ENCODE measurements at regions of chr19 and their contacts with region 1.

Region 1: GRCh38 chr19:19488875-19489690 is 26.3 kb downstream of the TSSK6 start:
- DNase-seq: peak; percentile 34 to 69
- ATAC-seq: peak; percentile 28 to 47
- H3K4me3 ChIP-seq: peak overlapping the region in 1 of 4 donors; percentile 25
- H3K27ac ChIP-seq: peak overlapping the region; percentile 44 to 77 (median 72)
- H3K4me1 ChIP-seq: peaks cover 35 to 40% of the 10 kb centered on the region in 2 donors
- H3K27me3 ChIP-seq: no peaks in the 10 kb centered on the region
- CTCF ChIP-seq: no peak
- POLR2A ChIP-seq: no peak

Region 2: GRCh38 chr19:19361075-19361594 is 127.9 kb before region 1 on chr19:
- in situ Hi-C with region 1: loop called (anchors 5 kb)
- intact Hi-C with region 1: no loop called
- DNase-seq: peak; percentile 32 to 76
- ATAC-seq: peak; percentile 85 to 88
- H3K4me3 ChIP-seq: no peak overlapping the region
- H3K27ac ChIP-seq: peak overlapping the region in 1 of 4 donors; percentile 32
- H3K4me1 ChIP-seq: no peaks in the 10 kb centered on the region
- H3K27me3 ChIP-seq: no peaks in the 10 kb centered on the region
- CTCF ChIP-seq: peak; percentile 64 to 79 (median 78)
- POLR2A ChIP-seq: no peak

Region 3: GRCh38 chr19:19366612-19367396 is 122.3 kb before region 1 on chr19:
- in situ Hi-C with region 1: loop called (anchors 5 kb)
- intact Hi-C with region 1: loop called (anchors 1 kb)
- DNase-seq: peak; percentile 18 to 70
- ATAC-seq: peak; percentile 84
- H3K4me3 ChIP-seq: no peak overlapping the region
- H3K27ac ChIP-seq: peak overlapping the region in 1 of 4 donors; percentile 22
- H3K4me1 ChIP-seq: no peaks in the 10 kb centered on the region
- H3K27me3 ChIP-seq: no peaks in the 10 kb centered on the region
- CTCF ChIP-seq: peak; percentile 90 to 96 (median 94)
- POLR2A ChIP-seq: no peak

Region 4: GRCh38 chr19:19385108-19385899 is 103.8 kb before region 1 on chr19:
- in situ Hi-C with region 1: no loop called
- intact Hi-C with region 1: loop called (anchors 5 kb)
- DNase-seq: peak; percentile 100
- ATAC-seq: peak; percentile 95 to 97
- H3K4me3 ChIP-seq: peak overlapping the region; percentile 73 to 96 (median 86)
- H3K27ac ChIP-seq: peak overlapping the region; percentile 81 to 93 (median 87)
- H3K4me1 ChIP-seq: peaks cover 37 to 47% of the 10 kb centered on the region in 2 donors
- H3K27me3 ChIP-seq: no peaks in the 10 kb centered on the region
- CTCF ChIP-seq: peak in 4 of 5 experiments; percentile 7 to 49 (median 34)
- POLR2A ChIP-seq: peak; percentile 46 to 49

Measured in gastrocnemius medialis (tissue), 4 donors.